ENCODE measurements at regions of chr6 and their contacts with region 1.

Region 1: DNA sequence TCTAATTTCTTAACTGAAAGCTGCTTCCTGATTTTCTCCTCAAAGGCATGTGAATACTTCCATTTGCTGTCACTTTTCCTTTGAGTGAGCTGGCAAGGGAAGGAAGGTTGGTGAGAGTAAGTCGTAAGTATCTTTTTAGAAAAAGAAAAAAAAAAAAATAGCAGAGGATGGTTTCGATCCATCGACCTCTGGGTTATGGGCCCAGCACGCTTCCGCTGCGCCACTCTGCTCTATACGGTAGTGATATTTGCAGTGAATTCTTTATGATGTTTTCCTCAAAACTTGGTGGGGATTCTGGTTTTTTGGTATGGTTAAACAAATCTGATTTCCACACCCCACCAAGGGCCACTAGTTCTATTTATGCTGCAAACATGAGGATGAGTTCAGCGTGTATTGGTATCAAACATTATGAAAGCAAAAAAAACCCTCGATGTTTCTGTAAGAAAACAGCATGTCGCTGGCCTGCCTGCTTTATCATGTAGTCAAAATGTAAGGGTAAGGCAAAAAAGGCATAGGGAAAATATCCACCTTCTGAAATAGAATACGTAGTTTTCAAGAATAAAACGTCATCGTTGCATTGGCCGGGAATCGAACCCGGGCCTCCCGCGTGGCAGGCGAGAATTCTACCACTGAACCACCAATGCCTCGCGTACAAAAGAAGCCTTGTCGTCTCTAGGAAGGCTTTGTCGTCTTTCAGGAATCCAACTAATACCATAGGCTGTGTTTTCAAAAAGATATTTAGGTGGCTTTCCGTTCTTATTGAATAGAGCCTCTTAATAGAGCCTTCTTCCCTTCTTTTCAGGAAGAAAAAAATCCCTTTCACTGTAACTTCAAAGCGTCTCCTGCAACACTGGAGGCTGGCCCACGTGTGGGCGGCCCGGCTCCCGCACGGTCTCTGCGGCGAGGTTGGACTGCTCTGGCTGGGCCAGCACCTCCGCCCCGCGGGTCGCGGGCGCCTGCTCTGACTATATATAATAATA is 9.6 kb downstream of the OR2B2 start:
- DNase-seq: peak; percentile 96
- H3K4me3 Mint-ChIP-seq: peak overlapping the region; percentile 85
- H3K27ac Mint-ChIP-seq: peak overlapping the region; percentile 91
- H3K4me1 Mint-ChIP-seq: peaks cover 15% of the 10 kb centered on the region
- H3K27me3 Mint-ChIP-seq: peaks cover 22% of the 10 kb centered on the region

Region 2: GRCh38 chr6:27188885-27189418 is 713.7 kb before region 1 on chr6:
- intact Hi-C with region 1: loop called (anchors 2 kb)
- DNase-seq: peak; percentile 86
- H3K4me3 Mint-ChIP-seq: peak overlapping the region; percentile 92
- H3K27ac Mint-ChIP-seq: no peak overlapping the region
- H3K4me1 Mint-ChIP-seq: peaks cover 10% of the 10 kb centered on the region
- H3K27me3 Mint-ChIP-seq: peaks cover 6% of the 10 kb centered on the region

Region 3: DNA sequence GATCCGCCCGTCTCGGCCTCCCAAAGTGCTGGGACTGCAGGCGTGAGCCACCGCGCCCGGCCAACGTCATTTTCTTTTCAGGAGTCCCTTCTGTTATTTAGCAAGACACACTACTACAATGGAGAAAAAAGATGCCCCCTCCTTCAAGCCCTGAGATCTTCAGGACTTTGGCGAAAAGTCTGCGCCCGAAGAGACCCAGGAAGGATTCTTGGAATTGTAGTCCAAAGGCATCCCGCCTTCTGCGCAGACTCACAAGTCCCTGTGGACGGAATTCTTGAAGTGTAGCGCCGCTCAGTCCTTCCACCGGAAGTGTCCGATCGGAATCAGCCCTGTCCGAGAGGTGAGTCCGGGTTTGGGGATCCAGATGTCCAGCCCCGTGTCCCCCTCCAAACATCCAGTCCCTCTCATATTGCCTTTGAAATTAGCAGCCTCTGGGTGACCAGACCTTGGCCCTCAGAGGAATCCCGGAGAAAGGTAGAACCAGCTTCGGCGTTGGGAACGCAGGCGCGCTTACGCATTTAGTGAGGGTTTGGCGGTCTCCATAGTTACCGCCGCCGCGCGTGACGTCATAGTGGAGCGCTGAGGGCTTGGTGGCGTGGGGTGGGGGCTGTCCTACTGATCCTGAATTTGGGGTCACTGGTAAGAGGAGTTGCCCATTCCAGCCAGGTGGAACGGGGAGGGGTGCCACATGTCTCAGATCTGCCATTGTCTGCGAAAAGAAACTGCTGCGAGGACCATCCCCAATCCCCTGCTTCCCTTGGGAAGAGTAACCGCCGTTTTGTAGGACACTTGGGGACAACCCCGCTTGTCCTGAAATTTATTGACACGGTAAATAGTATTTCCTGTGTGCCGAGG is 178.2 kb after region 1 on chr6:
- intact Hi-C with region 1: loop called (anchors 10 kb)
- DNase-seq: peak; percentile 97
- H3K4me3 Mint-ChIP-seq: peak overlapping the region; percentile 97
- H3K27ac Mint-ChIP-seq: peak overlapping the region; percentile 94
- H3K4me1 Mint-ChIP-seq: peaks cover 14% of the 10 kb centered on the region
- H3K27me3 Mint-ChIP-seq: no peaks in the 10 kb centered on the region

Region 4: DNA sequence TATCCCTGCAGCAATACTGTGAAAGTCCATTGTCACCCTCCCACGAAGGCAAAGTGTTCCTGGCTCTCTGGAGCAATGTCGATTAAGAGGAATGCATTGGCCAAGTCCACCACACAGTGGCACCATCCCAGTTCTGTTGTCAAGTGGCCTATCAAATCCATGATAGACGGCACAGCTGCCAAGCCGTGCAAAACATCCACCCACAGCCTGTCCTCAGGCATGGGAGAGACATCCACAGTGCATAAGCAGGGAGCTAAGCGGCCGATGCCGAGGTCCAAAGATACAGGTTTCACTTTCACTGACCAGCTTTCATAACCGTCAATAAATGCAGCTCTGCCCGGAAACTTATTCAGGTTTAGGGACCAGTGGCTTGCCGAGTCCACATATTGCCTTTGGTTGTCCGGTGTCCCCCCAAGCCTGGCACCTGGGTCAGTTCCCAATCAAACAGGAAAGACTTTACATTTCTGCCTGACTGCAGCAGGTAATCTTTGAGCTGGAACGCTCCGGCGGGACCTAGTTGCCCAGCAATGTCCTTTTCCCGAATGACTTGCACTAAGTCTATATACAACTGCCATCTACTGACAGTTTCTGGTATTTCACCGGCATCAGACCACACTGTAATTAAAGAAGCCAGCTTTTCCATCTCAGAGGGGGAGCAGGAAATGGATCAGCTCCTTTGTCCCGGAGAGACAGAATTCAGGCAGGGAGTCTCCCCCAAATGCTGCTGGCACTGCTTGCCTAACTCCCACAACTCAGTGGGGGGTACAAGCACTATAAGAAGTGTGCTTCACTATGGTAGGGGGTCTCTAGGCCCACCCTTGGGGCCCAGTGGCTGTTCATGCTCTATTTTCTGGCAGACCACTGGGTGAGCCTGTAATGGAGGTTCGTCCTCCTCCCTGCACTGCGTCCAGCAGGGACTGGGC is 453.4 kb after region 1 on chr6:
- intact Hi-C with region 1: loop called (anchors 10 kb)
- DNase-seq: peak; percentile 91
- H3K4me3 Mint-ChIP-seq: peak overlapping the region; percentile 93
- H3K27ac Mint-ChIP-seq: peak overlapping the region; percentile 79
- H3K4me1 Mint-ChIP-seq: peaks cover 16% of the 10 kb centered on the region
- H3K27me3 Mint-ChIP-seq: no peaks in the 10 kb centered on the region

Region 5: GRCh38 chr6:28553986-28554881 is 651.6 kb after region 1 on chr6:
- intact Hi-C with region 1: no loop called
- DNase-seq: no peak
- H3K4me3 Mint-ChIP-seq: no peak overlapping the region
- H3K27ac Mint-ChIP-seq: no peak overlapping the region
- H3K4me1 Mint-ChIP-seq: peaks cover 10% of the 10 kb centered on the region
- H3K27me3 Mint-ChIP-seq: peaks cover 60% of the 10 kb centered on the region

Region 6: DNA sequence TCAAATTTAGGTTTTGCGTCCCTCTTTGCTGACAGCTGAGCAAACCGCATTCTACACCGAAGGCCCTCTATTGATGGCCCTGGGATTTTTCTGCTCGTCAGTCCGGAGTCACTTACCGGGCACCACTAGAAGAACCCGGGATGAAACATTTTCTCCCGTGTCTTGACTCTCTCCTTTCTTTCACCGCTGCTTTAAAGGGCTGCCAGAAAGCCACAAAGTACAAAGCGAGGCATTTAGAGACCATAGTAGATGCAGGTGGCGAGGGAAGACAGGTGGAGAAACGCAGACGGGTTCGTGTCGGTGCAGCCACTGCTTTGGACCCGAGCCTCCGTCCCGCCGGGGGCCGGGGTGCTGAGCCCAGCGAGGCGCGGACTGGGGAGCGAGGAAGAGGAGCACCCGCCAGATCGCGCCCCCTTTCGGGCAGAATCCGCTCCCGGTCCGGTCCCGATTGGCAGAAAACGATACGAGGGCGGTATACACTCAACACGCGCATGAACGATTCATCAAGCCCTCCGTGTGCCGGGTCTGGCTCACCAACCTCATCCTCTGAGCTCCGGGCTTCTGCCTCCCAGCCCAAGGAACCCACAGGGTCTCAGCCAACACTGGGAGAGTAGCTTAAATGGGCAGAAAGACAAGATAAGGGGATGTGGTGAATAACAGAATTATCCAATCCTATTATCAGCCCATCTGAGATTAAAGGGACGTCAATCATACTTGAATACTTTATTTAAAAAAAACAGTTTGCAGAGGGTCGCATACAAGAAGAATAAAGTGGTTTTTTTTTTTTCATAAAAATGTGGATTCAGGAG is 936.2 kb after region 1 on chr6:
- intact Hi-C with region 1: loop called (anchors 10 kb)
- DNase-seq: peak; percentile 94
- H3K4me3 Mint-ChIP-seq: peak overlapping the region; percentile 98
- H3K27ac Mint-ChIP-seq: peak overlapping the region; percentile 81
- H3K4me1 Mint-ChIP-seq: peaks cover 16% of the 10 kb centered on the region
- H3K27me3 Mint-ChIP-seq: peaks cover 44% of the 10 kb centered on the region

Region 7: DNA sequence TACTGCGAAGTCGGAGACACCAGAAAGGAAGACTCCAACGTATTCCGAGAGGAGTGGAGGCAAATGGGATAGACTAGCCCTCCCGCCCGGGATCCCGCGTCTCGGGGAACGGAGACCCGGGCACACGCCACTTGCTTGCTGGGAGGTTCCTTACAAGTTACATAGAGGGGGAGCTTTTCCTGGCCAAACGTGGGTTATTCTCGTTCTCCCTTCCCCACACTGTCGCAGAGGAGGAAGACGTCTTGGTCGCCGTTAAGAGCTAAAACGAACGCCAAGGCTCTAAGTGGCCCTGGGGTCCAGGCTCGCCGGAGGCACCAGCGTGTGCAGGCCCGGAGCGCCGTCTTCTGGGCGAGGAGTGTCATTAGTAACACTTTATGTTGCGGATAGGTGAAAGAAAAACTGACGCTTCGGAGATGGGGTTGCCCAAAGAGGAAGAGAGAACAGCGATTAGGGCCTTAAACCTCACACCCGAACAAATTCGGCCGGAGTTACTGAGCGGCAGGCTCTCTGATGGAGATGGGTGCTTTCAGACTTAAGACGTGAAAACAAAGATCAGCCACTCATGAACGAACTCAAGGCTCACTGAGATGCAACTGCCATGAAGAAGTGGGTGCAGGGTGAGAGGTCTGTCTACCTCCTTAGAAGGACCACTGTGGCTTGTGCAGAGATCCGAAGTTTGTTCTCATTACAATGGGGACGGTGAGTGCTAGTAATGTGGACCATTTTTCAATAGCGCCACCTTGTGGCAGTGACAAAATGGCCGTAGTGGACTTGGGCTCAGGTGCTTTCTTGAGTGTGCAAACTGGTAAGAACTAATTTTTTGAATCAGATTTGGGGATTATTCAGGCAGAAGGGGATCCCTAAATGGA is 1114.2 kb after region 1 on chr6:
- intact Hi-C with region 1: loop called (anchors 10 kb)
- DNase-seq: peak; percentile 95
- H3K4me3 Mint-ChIP-seq: peak overlapping the region; percentile 89
- H3K27ac Mint-ChIP-seq: peak overlapping the region; percentile 82
- H3K4me1 Mint-ChIP-seq: peaks cover 12% of the 10 kb centered on the region
- H3K27me3 Mint-ChIP-seq: peaks cover 26% of the 10 kb centered on the region

Region 8: GRCh38 chr6:29216528-29216927 is 1313.9 kb after region 1 on chr6:
- intact Hi-C with region 1: no loop called
- DNase-seq: no peak
- H3K4me3 Mint-ChIP-seq: no peak overlapping the region
- H3K27ac Mint-ChIP-seq: no peak overlapping the region
- H3K4me1 Mint-ChIP-seq: no peaks in the 10 kb centered on the region
- H3K27me3 Mint-ChIP-seq: peaks cover 12% of the 10 kb centered on the region

Measured in activated CD4-positive, alpha-beta T cell treated with anti-CD3 and anti-CD28 coated beads, Interleukin-2, amount 10 ng/mL, durations not matched to agents 24 days and 14 days (primary cell).